T-cell (primary cell): ENCODE measurements at regions of chr1 and their contacts with region 1.

Region 1: DNA sequence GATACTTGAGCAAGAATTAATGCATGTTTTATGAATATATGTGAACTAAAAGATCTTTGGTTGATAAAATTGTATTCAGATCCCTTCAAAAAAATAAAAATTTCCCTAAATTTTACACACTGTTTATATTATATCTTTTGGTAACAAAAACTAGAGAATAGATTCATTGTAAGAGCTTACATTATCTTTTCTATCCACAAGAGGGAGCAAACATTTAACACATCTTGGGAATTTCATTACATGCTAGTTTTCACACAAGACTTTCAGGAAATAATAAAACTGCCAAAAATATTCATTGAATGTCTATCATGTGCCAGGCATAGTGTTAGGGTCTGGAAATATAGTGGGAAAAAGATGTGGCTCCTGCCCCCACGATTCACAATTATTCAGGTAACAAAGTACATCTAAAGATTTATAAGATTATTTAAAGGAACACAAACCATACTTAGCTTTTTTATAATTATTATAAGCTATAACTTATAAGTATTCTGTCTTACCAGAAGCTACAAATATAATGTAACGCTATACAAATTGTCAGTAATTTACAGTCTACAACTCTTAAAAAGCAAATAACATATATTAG is 30.6 kb downstream of the FAF1 start:
- DNase-seq: peak in 1 of 35 experiments; percentile 53
- ATAC-seq: no peak
- H3K4me3 ChIP-seq: no peak overlapping the region
- H3K4me3 Mint-ChIP-seq: no peak overlapping the region
- H3K27ac ChIP-seq: no peak overlapping the region
- H3K27ac Mint-ChIP-seq: no peak overlapping the region
- H3K4me1 ChIP-seq: peaks cover 0 to 3% of the 10 kb centered on the region in 2 experiments
- H3K4me1 Mint-ChIP-seq: peaks cover 33 to 42% (median 40%) of the 10 kb centered on the region in 3 donors
- H3K27me3 ChIP-seq: no peaks in the 10 kb centered on the region
- H3K27me3 Mint-ChIP-seq: no peaks in the 10 kb centered on the region

Region 2: DNA sequence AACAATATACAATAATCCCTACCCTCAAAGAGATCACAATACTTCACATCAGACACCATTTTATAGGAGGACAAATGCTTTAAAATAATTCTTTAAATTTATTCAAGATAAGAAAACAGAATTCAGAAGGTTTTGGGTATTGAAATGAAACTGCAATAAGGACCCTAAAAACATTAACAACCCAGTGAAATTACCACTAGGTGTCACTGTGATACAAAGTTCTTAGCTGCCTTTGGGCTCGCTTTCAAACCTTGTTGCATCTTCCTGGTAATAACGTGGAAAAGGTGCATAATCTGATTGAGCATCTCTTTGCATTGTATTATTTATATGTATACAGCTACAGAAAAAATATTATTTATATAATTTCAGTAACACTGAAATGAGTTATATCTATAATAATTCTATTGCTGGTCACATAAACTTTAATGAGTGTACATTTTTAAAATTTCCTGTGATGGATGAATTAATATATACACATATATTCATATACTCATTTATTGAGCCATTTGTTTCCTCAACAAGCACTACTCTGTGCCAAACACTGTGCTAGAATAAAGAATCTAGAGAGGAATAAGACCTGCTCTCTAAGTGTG is 154.6 kb before region 1 on chr1:
- CTCF ChIA-PET with region 1: interaction called in 1 of 2 experiments, 10 read pairs
- POLR2A ChIA-PET with region 1: no interaction called
- DNase-seq: peak in 1 of 35 experiments; percentile 69
- ATAC-seq: peak in 1 of 4 experiments; percentile 54
- H3K4me3 ChIP-seq: no peak overlapping the region
- H3K4me3 Mint-ChIP-seq: no peak overlapping the region
- H3K27ac ChIP-seq: no peak overlapping the region
- H3K27ac Mint-ChIP-seq: no peak overlapping the region
- H3K4me1 ChIP-seq: no peaks in the 10 kb centered on the region
- H3K4me1 Mint-ChIP-seq: peaks cover 10 to 17% (median 15%) of the 10 kb centered on the region in 3 donors
- H3K27me3 ChIP-seq: no peaks in the 10 kb centered on the region
- H3K27me3 Mint-ChIP-seq: no peaks in the 10 kb centered on the region

Region 3: GRCh38 chr1:50901872-50902271 is 27.6 kb before region 1 on chr1:
- CTCF ChIA-PET with region 1: no interaction called
- POLR2A ChIA-PET with region 1: no interaction called
- DNase-seq: no peak
- ATAC-seq: no peak
- H3K4me3 ChIP-seq: no peak overlapping the region
- H3K4me3 Mint-ChIP-seq: no peak overlapping the region
- H3K27ac ChIP-seq: no peak overlapping the region
- H3K27ac Mint-ChIP-seq: no peak overlapping the region
- H3K4me1 ChIP-seq: no peaks in the 10 kb centered on the region
- H3K4me1 Mint-ChIP-seq: peaks cover 24 to 37% (median 33%) of the 10 kb centered on the region in 3 donors
- H3K27me3 ChIP-seq: no peaks in the 10 kb centered on the region
- H3K27me3 Mint-ChIP-seq: no peaks in the 10 kb centered on the region

Region 4: DNA sequence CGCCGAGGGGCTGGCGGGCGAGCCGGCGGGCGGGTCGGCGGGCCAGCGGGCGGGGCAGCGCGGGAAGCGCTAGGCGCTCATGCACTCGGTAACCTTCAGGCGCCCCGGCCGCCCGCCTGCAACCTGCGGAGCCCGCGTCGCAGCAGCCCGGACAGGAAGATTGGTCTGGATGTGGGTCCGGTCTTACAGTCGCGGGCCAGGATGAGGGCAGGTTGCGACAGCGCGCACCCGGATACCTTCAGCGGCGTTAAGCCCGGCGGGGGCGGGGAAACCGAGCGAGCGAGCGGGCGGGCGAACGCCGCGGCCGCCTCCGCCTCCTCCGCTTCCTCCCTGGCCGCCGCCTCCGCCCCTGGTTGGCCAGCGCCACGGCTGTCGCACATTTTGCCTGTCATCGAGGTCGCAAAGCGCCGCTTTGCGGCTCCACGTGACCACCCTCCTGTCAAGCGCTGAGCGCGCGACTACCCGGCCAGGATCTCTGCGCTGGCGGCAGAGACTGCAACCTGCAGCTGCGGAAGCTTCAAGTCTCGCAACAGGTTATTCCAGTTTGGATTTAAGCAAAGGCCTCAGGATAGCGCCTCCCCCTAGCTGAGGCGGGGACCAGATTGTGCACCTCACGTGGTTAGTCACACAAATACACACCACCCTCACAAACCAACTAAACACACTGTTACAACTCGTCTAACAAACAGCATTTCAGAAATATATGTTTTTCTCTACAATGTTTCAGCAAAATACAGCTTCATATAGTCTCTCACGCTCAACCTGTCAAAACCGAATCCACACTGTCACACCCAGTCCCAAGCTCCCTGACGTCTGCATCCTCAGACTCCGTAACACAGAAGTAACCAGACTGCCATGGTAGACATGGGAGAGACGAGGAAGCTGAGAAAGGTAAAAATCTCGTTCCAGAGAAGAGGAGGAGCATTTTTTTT is 30.7 kb after region 1 on chr1 and contains the start of gene FAF1:
- CTCF ChIA-PET with region 1: interaction called in 1 of 2 experiments, 16 read pairs
- POLR2A ChIA-PET with region 1: no interaction called
- DNase-seq: peak; percentile 93 to 99 (median 98)
- ATAC-seq: peak; percentile 88 to 95 (median 92)
- H3K4me3 ChIP-seq: peak within 1 kb of the TSS; percentile 80 to 81
- H3K4me3 Mint-ChIP-seq: peak within 1 kb of the TSS; percentile 72 to 92 (median 89)
- H3K27ac ChIP-seq: peak within 1 kb of the TSS; percentile 65
- H3K27ac Mint-ChIP-seq: peak within 1 kb of the TSS; percentile 91 to 98
- H3K4me1 ChIP-seq: peaks cover 7 to 9% of the 10 kb centered on the region in 2 experiments
- H3K4me1 Mint-ChIP-seq: peaks cover 23 to 25% (median 25%) of the 10 kb centered on the region in 3 donors
- H3K27me3 ChIP-seq: no peaks in the 10 kb centered on the region
- H3K27me3 Mint-ChIP-seq: no peaks in the 10 kb centered on the region
- total RNA-seq, gene FAF1: 34.6 to 57.8 (median 35.5) TPM

Region 5: DNA sequence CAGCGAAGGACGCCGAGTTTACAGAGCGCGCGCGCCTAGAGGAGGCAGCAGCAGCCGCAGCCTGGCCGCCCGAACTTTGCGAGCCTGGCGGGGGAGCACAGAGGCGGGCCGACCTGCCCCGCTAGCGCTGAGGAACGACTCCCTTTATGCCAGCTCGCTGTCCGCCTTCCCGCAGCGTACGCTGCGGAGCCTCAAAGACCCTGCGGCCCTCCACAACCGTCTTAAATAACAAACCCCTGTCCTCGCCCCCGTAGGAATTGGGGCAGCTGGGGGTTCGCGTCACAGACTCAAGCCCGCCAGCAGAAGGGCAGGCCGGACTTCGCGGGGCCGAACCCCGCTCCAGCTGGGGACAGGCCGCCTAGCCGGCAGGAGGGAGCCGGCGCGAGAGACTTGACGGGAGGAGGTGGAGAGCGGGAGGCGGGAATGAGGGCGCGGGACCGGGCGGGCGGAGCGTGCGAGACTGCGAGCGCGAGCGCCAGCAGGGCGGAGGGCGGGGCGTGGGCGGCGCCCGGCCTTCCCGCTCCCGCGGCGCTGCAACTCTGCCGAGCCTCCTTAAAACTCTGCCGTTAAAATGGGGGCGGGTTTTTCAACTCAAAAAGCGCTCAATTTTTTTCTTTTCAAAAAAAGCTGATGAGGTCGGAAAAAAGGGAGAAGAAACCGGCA is 38.8 kb after region 1 on chr1:
- CTCF ChIA-PET with region 1: interaction called, 4 to 26 read pairs
- POLR2A ChIA-PET with region 1: no interaction called
- DNase-seq: peak; percentile 64 to 91 (median 74)
- ATAC-seq: peak; percentile 83 to 90 (median 87)
- H3K4me3 ChIP-seq: peak overlapping the region; percentile 98 to 100
- H3K4me3 Mint-ChIP-seq: peak overlapping the region; percentile 96 to 98 (median 98)
- H3K27ac ChIP-seq: peak overlapping the region; percentile 89
- H3K27ac Mint-ChIP-seq: peak overlapping the region; percentile 87 to 91
- H3K4me1 ChIP-seq: peaks cover 8 to 13% of the 10 kb centered on the region in 2 experiments
- H3K4me1 Mint-ChIP-seq: peaks cover 25 to 31% (median 27%) of the 10 kb centered on the region in 3 donors
- H3K27me3 ChIP-seq: no peaks in the 10 kb centered on the region
- H3K27me3 Mint-ChIP-seq: no peaks in the 10 kb centered on the region

Region 6: DNA sequence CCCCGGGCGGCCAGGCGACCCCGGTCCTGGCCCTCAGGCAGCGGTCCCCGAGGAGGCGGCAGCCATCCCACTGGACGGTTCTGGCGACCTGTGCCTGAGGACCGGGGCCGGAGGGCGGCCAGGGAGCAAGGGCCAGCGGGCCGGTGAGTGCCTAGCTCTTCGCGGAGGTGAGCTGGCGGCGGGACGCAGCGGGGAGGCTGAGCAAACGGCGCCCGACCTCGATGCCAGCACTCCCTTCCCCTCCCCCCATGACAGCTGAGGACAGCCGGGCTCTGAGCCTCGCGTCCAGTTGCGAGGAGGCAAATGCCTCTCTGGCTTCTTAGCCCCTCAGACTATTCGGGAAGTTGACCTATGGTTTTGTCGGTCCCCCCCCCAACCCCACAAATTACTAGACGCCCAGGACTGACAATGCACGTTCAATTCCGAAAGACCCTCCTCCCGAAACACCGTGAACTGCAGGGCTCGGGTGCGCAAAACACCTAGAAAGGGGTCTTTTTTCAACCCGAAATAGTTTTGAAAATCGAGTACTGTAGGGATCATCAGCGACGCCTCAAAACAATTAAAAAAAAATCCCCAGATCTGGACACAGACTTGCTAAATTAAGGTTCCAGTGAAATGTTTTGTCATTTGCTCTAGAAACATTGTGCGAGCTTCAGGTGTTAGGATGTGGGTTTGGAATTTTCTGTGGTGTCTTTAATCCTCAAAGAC is 48.8 kb after region 1 on chr1:
- CTCF ChIA-PET with region 1: interaction called, 4 to 10 read pairs
- POLR2A ChIA-PET with region 1: no interaction called
- DNase-seq: peak in 14 of 35 experiments; percentile 1 to 53 (median 12)
- ATAC-seq: peak; percentile 29 to 56 (median 53)
- H3K4me3 ChIP-seq: peak overlapping the region; percentile 81 to 83
- H3K4me3 Mint-ChIP-seq: peak overlapping the region; percentile 82 to 85 (median 83)
- H3K27ac ChIP-seq: peak overlapping the region; percentile 26
- H3K27ac Mint-ChIP-seq: peak overlapping the region; percentile 80 to 88
- H3K4me1 ChIP-seq: peaks cover 8 to 25% of the 10 kb centered on the region in 2 experiments
- H3K4me1 Mint-ChIP-seq: peaks cover 20 to 33% (median 22%) of the 10 kb centered on the region in 3 donors
- H3K27me3 ChIP-seq: peaks cover 14 to 27% of the 10 kb centered on the region in 2 experiments
- H3K27me3 Mint-ChIP-seq: peaks cover 0 to 34% of the 10 kb centered on the region in 2 donors

Region 7: GRCh38 chr1:51192213-51192843 is 262.9 kb after region 1 on chr1:
- CTCF ChIA-PET with region 1: interaction called, 18 to 62 read pairs
- POLR2A ChIA-PET with region 1: no interaction called
- DNase-seq: peak in 30 of 35 experiments; percentile 3 to 72 (median 36)
- ATAC-seq: peak in 1 of 4 experiments; percentile 50
- H3K4me3 ChIP-seq: no peak overlapping the region
- H3K4me3 Mint-ChIP-seq: no peak overlapping the region
- H3K27ac ChIP-seq: no peak overlapping the region
- H3K27ac Mint-ChIP-seq: no peak overlapping the region
- H3K4me1 ChIP-seq: no peaks in the 10 kb centered on the region
- H3K4me1 Mint-ChIP-seq: no peaks in the 10 kb centered on the region
- H3K27me3 ChIP-seq: no peaks in the 10 kb centered on the region
- H3K27me3 Mint-ChIP-seq: no peaks in the 10 kb centered on the region

Region 8: DNA sequence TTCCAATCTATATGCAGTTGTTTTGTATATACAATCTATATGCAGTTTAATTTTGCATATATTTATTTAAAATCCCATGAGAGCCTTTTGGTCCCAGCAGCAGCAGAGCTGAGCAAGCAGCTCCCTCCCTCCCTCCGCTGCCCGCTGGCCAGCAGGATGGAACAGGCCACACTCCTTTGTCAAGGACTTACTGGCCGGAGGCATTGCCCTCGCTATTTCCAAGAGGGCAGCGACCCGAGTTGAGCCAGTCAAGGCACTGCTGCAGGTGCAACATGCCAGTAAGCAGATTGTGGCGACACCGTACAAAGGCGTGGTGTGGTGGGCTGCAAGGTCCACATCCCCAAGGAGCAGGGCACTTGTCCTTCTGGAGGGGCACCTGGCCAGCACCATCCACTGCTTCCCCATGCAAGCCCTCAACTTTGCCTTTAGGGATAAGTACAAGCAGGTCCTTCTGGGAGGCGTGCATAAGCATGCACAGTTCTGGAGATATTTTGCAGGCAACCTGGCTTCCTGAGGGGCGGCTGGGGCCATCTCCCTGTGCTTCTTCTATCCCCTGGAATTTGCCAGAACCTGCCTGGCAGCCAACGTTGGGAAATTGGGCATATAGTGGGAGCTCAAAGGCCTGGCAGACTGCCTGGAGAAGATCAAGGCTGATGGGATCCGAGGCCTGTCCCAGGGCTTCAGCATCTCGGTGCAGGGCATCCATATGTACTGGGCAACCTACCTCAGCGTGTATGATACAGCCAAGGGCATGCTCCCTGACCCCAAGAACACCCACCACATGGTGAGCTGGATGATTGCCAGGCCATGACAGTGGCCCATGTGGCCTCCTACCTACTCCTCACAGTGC is 779.7 kb after region 1 on chr1:
- CTCF ChIA-PET with region 1: no interaction called
- POLR2A ChIA-PET with region 1: no interaction called
- DNase-seq: no peak
- ATAC-seq: no peak
- H3K4me3 ChIP-seq: no peak overlapping the region
- H3K4me3 Mint-ChIP-seq: no peak overlapping the region
- H3K27ac ChIP-seq: no peak overlapping the region
- H3K27ac Mint-ChIP-seq: no peak overlapping the region
- H3K4me1 ChIP-seq: no peaks in the 10 kb centered on the region
- H3K4me1 Mint-ChIP-seq: peaks cover 6 to 11% (median 8%) of the 10 kb centered on the region in 3 donors
- H3K27me3 ChIP-seq: no peaks in the 10 kb centered on the region
- H3K27me3 Mint-ChIP-seq: no peaks in the 10 kb centered on the region